H1 (cell line): ENCODE measurements at regions of chr7 and their contacts with region 1.

Region 1: GRCh38 chr7:139393621-139394211 is 34.0 kb downstream of the LUC7L2 start:
- DNase-seq: no peak
- H3K4me3 ChIP-seq: no peak overlapping the region
- H3K27ac ChIP-seq: no peak overlapping the region
- H3K4me1 ChIP-seq: no peaks in the 10 kb centered on the region
- H3K27me3 ChIP-seq: no peaks in the 10 kb centered on the region
- CTCF ChIP-seq: no peak
- EP300 ChIP-seq: no peak
- POLR2A ChIP-seq: no peak
- RAD21 ChIP-seq: no peak

Region 2: DNA sequence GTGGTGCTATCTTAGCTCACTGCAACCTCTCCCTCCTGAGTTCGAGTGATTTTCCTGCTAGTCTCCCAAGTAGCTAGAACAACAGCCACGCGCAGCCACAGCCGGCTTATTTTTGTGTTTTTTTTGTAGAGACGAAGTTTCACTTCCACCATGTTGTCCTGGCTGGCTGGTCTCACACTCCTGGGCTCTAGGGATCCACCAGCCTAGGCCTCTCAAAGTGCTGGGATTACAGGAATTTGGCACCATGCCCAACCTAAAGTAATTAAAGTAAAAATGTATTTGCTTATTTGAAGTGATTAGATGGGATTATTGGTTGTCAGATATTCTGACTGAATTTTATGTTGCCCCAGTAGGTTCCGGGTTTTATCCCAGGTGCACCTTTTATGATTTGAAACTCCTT is 11.3 kb before region 1 on chr7:
- CTCF ChIA-PET with region 1: interaction called, 10 read pairs
- POLR2A ChIA-PET with region 1: interaction called, 5 read pairs
- DNase-seq: no peak
- H3K4me3 ChIP-seq: no peak overlapping the region
- H3K27ac ChIP-seq: no peak overlapping the region
- H3K4me1 ChIP-seq: no peaks in the 10 kb centered on the region
- H3K27me3 ChIP-seq: no peaks in the 10 kb centered on the region
- CTCF ChIP-seq: no peak
- EP300 ChIP-seq: no peak
- POLR2A ChIP-seq: no peak
- RAD21 ChIP-seq: no peak